HEK293T (cell line): ENCODE measurements at regions of chr1 and their contacts with region 1.

Region 1: DNA sequence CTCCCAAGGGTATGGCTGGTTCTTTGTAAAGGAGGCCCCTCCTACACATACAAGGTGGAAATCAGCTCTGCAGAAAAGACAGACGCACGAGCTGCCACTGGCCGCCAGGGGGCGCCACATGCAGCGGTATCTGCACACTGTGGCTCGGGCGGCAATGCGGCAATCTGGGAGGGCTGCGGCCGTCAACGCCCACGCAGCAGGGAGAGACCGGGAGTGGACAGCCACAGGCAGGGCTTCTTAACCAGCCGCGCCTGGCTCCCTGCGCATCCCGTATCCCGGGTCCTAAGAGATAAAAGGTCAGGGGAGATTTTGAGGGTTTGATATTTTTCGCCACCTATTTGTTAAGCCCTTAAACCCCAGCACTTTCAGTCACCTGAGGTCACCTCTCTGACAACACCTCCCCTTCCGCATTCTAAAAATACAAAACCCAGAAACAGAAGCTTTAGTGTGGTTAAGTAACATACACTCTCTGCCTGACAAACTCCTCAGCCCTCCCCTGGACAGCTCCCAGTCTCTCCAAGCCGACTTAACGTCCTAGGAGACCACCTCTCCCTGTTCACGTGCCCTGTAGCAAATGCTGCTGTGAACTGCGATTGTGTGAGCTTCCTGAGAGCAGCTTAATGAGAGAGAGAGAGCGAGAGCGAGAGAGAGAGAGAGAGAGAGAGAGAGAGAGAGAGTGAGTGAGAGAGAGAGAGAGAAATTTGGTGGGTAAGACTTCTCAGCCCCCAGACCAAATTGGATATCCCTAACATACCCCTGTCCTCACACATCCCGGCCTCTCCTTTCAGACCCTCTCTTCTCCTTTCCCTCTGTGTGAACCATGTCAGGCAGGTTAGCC is 13.5 kb upstream of the KCNA2 start:
- DNase-seq: peak; percentile 90

Region 2: DNA sequence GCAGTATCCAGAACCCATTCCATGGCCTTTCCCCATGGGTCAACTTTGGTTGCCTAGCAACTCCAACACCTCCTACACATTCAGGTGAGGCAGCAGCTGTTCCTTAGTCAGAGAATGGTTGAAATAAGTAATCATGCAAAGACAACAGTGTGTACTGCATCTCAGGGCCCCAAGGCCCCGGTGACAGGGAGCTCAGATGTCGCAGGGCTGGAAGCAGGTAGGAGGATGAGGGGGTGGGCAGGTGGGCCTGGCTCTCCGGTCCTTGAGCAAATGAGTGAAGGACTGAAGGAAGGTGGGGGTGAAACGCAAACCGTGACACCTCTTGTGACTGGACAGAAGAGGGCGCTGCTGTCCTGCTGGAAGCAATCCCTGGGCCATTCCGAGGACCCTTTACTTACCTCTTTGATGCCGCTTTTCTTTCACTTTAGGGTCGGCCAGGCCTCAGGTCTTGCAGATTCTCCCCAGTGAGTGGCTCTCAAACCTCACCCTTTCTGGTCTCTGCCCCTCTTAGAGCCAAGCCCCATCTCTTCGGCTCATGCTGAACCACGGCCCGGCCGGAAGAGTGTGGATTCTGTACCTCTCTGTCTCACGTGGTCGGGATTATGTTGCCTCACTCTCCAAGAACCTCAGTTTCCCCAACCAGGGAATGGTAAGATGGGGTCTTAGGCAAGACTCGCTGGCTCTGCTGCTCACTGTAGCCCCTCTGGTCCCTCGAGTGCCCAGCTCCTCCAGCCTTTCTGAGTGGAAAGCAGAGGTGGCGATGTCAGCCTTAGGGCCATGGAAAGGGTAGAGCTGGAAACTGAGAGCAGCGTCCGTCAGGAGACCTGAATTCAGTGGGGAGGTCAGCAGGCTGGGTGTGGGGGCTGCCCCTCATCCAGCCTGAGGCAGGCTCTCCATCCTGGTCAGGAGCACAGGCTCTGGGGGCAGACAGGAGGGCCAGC is 95.0 kb before region 1 on chr1:
- CTCF ChIA-PET with region 1: interaction called, 14 read pairs
- POLR2A ChIA-PET with region 1: no interaction called
- DNase-seq: peak; percentile 89

Region 3: DNA sequence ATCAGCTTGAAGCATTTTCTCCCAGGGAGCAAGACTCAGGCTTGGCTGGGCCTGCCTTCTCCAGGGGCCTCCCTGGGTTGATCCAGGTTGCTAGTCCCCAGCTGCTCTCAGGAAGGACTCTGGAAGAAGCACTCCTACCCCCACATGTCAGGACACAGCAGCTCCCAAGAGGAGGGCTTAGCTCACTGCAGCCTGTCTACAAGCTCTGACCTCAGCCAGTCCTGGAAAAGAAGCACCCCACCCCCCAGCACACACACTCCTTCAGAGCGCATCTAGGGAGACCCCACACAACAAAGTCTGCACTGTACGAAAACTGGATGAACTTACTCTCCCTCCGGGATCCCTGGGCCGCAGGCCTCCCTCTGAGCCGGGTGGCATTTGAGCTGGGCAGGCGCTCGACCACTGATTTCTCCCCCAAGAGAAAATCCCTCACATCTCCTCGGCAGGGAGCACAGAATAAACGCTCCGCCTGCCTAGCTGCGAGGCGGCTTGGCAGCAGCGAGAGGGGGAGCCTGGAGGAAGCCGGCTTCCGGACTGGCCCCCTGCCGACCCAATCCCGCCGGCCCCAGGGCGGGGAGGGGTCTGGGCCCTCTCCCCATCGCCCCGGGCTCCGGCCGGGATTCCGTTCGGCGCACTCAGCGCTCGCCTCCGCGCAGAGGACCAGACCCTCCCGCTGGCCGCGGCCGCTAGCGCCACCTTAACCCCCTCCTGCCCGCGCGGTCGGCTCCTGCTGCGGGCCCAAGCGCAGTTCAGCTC is 13.6 kb before region 1 on chr1 and contains the start of gene KCNA2:
- CTCF ChIA-PET with region 1: interaction called, 16 read pairs
- POLR2A ChIA-PET with region 1: no interaction called
- DNase-seq: peak; percentile 66

Region 4: GRCh38 chr1:110766025-110766647 is 146.5 kb after region 1 on chr1:
- CTCF ChIA-PET with region 1: interaction called, 30 read pairs
- POLR2A ChIA-PET with region 1: no interaction called
- DNase-seq: peak; percentile 63

Region 5: DNA sequence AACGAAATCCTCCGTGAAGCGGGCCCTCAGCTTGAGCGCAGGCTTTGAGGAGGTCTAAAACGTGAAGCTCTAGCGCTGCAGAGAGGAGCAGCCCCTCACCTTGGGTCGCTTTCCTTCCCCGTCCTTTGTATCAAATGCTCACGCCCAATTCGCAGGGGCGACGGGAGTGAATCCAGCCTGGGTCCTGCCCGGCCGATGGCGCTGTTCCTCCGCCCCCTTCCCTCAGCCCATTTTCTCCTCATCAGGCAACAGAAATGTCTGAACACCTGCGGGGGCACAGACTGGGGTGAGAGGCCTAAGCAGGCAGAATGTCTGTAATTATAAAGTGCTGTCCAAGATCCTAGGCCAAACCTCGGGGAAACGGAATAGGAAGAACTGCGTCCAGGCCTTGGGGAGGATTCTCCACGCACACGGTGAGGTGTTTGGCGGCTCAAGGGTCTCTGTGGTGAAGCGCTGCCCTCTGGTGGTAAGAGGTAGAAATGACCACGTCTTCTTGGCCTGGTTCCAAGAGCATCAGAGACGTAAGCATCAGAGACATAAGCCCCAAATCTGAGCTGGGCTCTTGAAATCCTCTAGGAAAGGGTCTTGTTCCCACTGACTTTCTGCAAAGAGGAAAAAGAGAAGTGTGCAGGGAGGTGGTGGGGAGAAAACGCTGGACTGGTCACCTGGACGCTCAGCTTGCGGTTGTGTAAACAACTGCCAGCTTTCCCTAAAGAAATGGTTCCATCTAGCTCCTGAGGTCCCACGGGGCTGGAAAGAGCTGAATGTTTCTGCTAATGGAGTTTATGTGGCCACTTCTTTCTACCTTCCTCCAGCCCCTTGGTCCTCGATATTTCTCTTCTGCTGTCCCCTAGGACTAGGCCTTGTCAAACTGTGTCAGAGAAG is 161.2 kb after region 1 on chr1:
- CTCF ChIA-PET with region 1: interaction called, 18 read pairs
- POLR2A ChIA-PET with region 1: no interaction called
- DNase-seq: peak; percentile 85